SK-N-SH (cell line): ENCODE measurements at regions of chr16 and their contacts with region 1.

Region 1: DNA sequence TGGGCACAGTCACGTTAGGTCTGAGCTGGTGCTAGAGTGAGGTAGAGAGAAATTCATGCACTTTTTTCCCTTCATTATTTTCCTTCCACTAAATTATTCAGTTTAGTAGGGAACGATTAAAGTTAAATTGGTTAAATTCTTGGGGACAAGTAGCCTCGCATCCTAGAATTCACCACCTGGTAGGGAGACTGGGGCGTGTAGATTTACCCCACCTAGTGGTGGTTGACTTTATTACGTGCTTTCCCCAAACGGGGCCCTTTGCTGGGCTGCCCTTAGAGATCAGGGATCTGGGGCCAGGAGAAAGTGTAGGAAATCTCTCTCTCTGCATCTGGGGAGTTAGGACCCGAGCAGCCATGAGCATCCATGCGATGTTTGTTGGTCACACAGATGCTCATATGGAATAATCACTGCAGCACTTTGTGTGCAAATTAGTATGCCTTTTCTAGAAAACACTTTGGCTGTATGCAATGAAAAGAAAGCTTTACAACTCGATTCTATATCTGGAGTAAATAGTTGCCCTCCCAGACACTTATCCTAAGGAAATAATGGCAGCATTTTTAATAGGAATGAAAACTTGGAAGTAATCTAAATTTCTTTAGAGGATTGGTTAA is 107.0 kb downstream of the PLCG2 start:
- DNase-seq: peak; percentile 65
- H3K4me3 ChIP-seq: no peak overlapping the region
- H3K27ac ChIP-seq: no peak overlapping the region
- H3K4me1 ChIP-seq: no peaks in the 10 kb centered on the region
- H3K27me3 ChIP-seq: no peaks in the 10 kb centered on the region; the same call in 1 of the 2 replicates
- CTCF ChIP-seq: peak; percentile 65
- EP300 ChIP-seq: no peak
- RAD21 ChIP-seq: 0 out of 2 replicates have a peak, but pooled peaks have one; percentile 19

Region 2: DNA sequence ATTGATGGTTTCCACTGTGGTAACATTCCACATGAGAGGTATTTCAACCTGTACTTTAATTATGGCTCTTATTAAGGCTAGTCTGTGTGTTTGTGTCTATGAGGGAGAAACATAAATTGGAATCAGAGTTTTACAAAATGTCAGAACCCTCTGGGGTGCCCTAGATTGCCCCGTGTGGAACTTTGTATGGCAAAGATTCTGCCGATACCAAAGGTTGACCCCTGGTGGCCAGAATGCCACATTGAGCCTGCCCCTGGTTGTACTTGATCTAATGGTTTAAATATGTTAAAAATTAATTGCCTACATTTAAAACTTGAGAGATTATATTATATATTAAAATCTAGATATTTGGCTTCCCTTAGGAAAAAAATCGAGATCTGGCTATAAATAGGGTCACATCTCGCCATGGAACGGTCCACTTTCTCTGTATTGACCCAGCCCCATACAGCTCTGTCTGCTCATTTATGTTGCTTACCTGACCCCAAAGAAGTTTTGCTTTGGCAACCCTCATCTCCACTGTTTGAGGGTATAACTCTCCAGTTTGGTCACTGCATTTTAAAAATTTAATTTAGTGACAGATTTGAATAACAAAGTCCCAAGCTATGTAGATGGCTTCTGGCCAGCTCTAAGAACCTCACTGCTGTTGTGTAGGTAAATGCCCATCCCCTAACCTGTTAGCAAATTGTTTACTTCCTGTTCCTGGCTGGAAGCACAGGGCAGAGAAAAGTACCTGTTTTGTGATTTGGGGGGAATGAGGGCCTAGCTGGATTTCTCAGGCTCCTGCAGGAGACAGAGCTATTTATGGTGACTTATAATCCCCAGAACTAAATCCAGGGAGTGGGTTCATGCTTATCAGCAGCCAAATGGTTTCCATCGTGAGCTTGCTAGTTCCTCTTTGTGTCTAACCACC is 12.0 kb before region 1 on chr16:
- CTCF ChIA-PET with region 1: interaction called, 30 read pairs
- POLR2A ChIA-PET with region 1: no interaction called
- DNase-seq: peak; percentile 58
- H3K4me3 ChIP-seq: peak overlapping the region in 1 of 2 experiments; percentile 35; a peak in 1 of 4 replicates
- H3K27ac ChIP-seq: no peak overlapping the region
- H3K4me1 ChIP-seq: no peaks in the 10 kb centered on the region
- H3K27me3 ChIP-seq: no peaks in the 10 kb centered on the region; the same call in 1 of the 2 replicates
- CTCF ChIP-seq: peak; percentile 86
- EP300 ChIP-seq: no peak
- RAD21 ChIP-seq: peak; percentile 49

Region 3: GRCh38 chr16:81905277-81905676 is 19.2 kb after region 1 on chr16:
- CTCF ChIA-PET with region 1: interaction called, 16 read pairs
- POLR2A ChIA-PET with region 1: no interaction called
- DNase-seq: no peak
- H3K4me3 ChIP-seq: no peak overlapping the region
- H3K27ac ChIP-seq: no peak overlapping the region
- H3K4me1 ChIP-seq: no peaks in the 10 kb centered on the region
- H3K27me3 ChIP-seq: no peaks in the 10 kb centered on the region
- CTCF ChIP-seq: no peak
- EP300 ChIP-seq: no peak
- RAD21 ChIP-seq: no peak

Region 4: GRCh38 chr16:82229796-82230619 is 343.9 kb after region 1 on chr16:
- CTCF ChIA-PET with region 1: interaction called, 19 read pairs
- POLR2A ChIA-PET with region 1: no interaction called
- DNase-seq: peak; percentile 39
- H3K4me3 ChIP-seq: peak overlapping the region in 1 of 2 experiments; percentile 21; a peak in 1 of 4 replicates
- H3K27ac ChIP-seq: no peak overlapping the region
- H3K4me1 ChIP-seq: no peaks in the 10 kb centered on the region
- H3K27me3 ChIP-seq: peaks cover 6% of the 10 kb centered on the region; the same call in 1 of the 2 replicates
- CTCF ChIP-seq: peak; percentile 85
- EP300 ChIP-seq: no peak
- RAD21 ChIP-seq: peak; percentile 78